Ovary (tissue), 10 donors: ENCODE measurements at regions of chr3 and their contacts with region 1.

Region 1: DNA sequence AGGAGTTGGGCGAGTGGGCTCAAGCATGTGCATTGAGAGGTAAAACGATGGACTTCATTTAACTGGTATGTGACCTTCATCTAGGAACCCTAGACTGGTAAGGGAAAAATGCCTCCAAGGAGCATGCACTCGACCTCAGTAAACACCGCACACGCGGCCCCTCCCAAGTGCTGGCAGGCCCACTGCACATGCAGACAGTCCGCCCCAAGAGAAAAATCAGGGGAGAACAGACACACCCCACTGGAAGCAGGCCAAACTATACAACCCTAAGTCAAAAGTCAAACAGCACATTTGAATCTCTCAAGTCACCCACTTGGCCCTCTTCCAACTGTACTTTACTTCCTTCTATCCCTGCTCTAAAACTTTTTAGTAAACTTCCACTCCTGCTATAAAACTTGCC is 250.1 kb upstream of the HES1 start:
- DNase-seq: no peak
- H3K4me3 ChIP-seq: no peak overlapping the region
- H3K27ac ChIP-seq: no peak overlapping the region
- H3K4me1 ChIP-seq: no peaks in the 10 kb centered on the region
- H3K27me3 ChIP-seq: no peaks in the 10 kb centered on the region
- CTCF ChIP-seq: no peak
- EP300 ChIP-seq: no peak
- POLR2A ChIP-seq: no peak

Region 2: DNA sequence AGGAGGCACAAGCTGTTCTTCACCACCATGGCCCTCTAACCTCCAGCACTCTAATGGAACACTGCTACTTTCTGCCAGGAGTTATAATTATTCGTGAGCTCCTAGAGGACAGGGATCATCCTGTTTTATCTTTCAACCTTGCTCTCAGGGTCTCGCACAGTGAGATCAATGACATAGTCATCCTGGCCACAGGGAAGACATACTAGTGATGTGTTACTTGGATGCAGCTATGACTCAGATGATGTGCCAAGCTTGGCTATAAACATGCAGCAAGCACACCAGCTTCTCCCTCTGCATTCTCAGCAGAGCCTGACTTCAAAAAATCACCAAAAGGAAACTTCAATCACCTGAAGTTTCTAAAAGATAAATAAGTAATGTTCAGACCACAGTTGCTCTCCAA is 46.3 kb after region 1 on chr3:
- intact Hi-C with region 1: loop called in 1 of 4 experiments (anchors 5 kb)
- DNase-seq: no peak
- H3K4me3 ChIP-seq: no peak overlapping the region
- H3K27ac ChIP-seq: no peak overlapping the region
- H3K4me1 ChIP-seq: no peaks in the 10 kb centered on the region
- H3K27me3 ChIP-seq: no peaks in the 10 kb centered on the region
- CTCF ChIP-seq: no peak
- EP300 ChIP-seq: no peak
- POLR2A ChIP-seq: no peak